Mammary epithelial cell (primary cell): ENCODE measurements at regions of chr18 and their contacts with region 1.

Region 1: DNA sequence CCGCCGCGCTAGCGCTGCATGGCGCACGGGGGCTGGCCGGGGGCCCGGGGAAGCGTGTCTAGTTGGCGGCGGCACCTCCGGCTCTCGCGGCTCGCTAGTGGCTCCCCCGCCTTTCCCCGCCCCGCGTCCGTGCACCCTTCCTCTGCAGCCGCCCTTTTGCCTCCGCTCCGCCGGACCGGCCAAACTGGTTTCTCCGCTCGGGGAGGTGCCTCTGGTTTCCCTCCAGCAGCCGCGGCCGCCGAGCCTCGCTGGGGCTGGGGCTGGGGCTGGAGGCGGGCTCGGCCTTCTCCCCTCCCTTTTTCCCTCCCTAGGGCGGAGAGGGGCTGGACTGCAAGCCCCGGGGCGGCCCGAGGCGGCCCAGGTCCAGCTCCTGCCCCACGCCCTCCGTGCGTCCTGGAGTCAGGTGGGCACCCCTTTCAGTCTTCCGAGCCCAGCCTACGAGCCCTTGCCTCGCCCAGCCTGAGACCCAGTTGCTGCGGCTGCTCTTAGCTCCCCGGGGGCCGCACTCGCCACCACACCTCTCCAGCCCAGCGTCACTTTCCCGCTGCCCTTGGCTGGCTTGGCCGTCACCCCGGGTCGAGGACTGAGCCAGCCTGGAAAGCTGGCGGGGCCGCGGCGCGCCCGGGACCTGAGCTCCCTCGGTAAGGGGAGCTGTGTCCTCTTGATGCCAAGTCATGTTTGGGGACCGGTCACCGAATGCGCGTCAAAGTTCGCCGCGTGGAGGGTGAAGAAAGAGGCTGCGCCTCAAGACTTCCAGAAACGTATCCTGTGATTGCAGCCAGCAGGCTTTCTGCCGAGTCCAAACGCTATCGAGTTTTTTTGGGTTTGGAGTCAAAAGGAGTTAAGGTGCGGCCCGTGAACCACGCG is at the start of gene ATP8B1:
- DNase-seq: peak; percentile 94
- H3K4me3 ChIP-seq: peak within 1 kb of the TSS; percentile 61 to 90 (median 74)
- H3K27ac ChIP-seq: peak within 1 kb of the TSS; percentile 39
- H3K4me1 ChIP-seq: peaks cover 38% of the 10 kb centered on the region
- H3K27me3 ChIP-seq: no peaks in the 10 kb centered on the region
- CTCF ChIP-seq: no peak
- total RNA-seq, gene ATP8B1: 12.7 to 15.0 TPM

Region 2: DNA sequence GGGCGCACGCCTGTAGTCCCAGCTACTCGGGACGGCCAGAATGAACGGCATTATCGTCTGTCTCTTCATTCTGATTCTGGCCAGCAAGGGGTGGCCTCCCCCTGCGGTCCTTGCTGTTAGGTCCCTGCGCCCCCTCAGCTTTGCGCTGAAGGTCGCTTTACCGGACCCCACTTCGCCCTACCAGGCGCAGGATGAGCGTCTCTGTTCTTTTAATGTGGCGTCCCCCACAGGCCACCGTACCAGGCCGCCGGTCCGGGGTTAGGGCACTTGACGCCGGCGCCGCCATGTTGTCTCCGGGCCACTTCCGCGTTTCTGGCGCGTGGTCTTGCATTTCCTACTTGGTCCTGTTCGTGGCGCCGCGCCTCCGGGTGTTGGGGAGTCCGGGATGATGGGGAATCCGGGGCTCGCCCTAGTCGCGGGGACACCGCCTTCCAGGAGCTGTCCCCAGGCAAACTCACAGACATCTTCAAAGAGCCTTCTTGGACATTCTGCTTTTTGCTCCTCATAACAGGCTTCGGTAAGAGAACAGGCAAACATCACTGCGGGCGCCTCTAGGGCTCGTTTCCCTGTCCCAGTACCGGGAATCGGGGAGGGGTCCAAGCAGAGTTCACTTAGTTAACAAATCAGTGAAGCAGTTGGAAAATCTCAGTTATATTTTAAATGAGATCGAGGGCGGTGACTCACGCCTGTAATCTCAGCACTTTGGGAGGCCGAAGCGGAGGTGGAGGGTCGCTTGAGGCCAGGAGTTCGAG is 173.2 kb before region 1 on chr18:
- CTCF ChIA-PET with region 1: no interaction called
- dilution Hi-C with region 1: no loop called
- in situ Hi-C with region 1: no loop called
- intact Hi-C with region 1: loop called (anchors 2 kb)
- DNase-seq: peak; percentile 93
- H3K4me3 ChIP-seq: peak overlapping the region; percentile 64 to 79 (median 68)
- H3K27ac ChIP-seq: peak overlapping the region; percentile 45
- H3K4me1 ChIP-seq: peaks cover 14% of the 10 kb centered on the region
- H3K27me3 ChIP-seq: no peaks in the 10 kb centered on the region
- CTCF ChIP-seq: peak; percentile 53 to 82

Region 3: GRCh38 chr18:57655740-57656139 is 147.6 kb before region 1 on chr18:
- CTCF ChIA-PET with region 1: interaction called, 10 read pairs
- dilution Hi-C with region 1: no loop called
- in situ Hi-C with region 1: no loop called
- intact Hi-C with region 1: no loop called
- DNase-seq: no peak
- H3K4me3 ChIP-seq: no peak overlapping the region
- H3K27ac ChIP-seq: no peak overlapping the region
- H3K4me1 ChIP-seq: no peaks in the 10 kb centered on the region
- H3K27me3 ChIP-seq: no peaks in the 10 kb centered on the region
- CTCF ChIP-seq: no peak

Region 4: GRCh38 chr18:57710226-57710625 is 93.1 kb before region 1 on chr18:
- CTCF ChIA-PET with region 1: no interaction called
- dilution Hi-C with region 1: no loop called
- in situ Hi-C with region 1: no loop called
- intact Hi-C with region 1: loop called (anchors 5 kb)
- DNase-seq: no peak
- H3K4me3 ChIP-seq: no peak overlapping the region
- H3K27ac ChIP-seq: no peak overlapping the region
- H3K4me1 ChIP-seq: peaks cover 9% of the 10 kb centered on the region
- H3K27me3 ChIP-seq: no peaks in the 10 kb centered on the region
- CTCF ChIP-seq: no peak

Region 5: GRCh38 chr18:57743008-57743407 is 60.3 kb before region 1 on chr18:
- CTCF ChIA-PET with region 1: no interaction called
- dilution Hi-C with region 1: no loop called
- in situ Hi-C with region 1: no loop called
- intact Hi-C with region 1: loop called (anchors 1 kb)
- DNase-seq: peak; percentile 83
- H3K4me3 ChIP-seq: no peak overlapping the region
- H3K27ac ChIP-seq: peak overlapping the region; percentile 33
- H3K4me1 ChIP-seq: peaks cover 19% of the 10 kb centered on the region
- H3K27me3 ChIP-seq: no peaks in the 10 kb centered on the region
- CTCF ChIP-seq: no peak

Region 6: GRCh38 chr18:57846258-57846657 is 42.9 kb after region 1 on chr18:
- CTCF ChIA-PET with region 1: no interaction called
- dilution Hi-C with region 1: no loop called
- in situ Hi-C with region 1: no loop called
- intact Hi-C with region 1: loop called (anchors 5 kb)
- DNase-seq: peak; percentile 33
- H3K4me3 ChIP-seq: no peak overlapping the region
- H3K27ac ChIP-seq: no peak overlapping the region
- H3K4me1 ChIP-seq: peaks cover 13% of the 10 kb centered on the region
- H3K27me3 ChIP-seq: no peaks in the 10 kb centered on the region
- CTCF ChIP-seq: no peak